Natural killer cell (primary cell): ENCODE measurements at regions of chr18 and their contacts with region 1.

Region 1: GRCh38 chr18:54805571-54806334 is 22.5 kb upstream of the RAB27B start:
- DNase-seq: peak in 1 of 2 donors; percentile 17
- ATAC-seq: peak; percentile 91 to 94 (median 93)
- H3K4me3 ChIP-seq: no peak overlapping the region
- H3K4me3 Mint-ChIP-seq: peak overlapping the region; percentile 69
- H3K27ac ChIP-seq: peak overlapping the region; percentile 40
- H3K27ac Mint-ChIP-seq: peak overlapping the region; percentile 67 to 87
- H3K4me1 ChIP-seq: peaks cover 4% of the 10 kb centered on the region
- H3K4me1 Mint-ChIP-seq: peaks cover 23 to 36% of the 10 kb centered on the region in 2 donors
- H3K27me3 ChIP-seq: no peaks in the 10 kb centered on the region
- H3K27me3 Mint-ChIP-seq: no peaks in the 10 kb centered on the region
- CTCF ChIP-seq: no peak

Region 2: DNA sequence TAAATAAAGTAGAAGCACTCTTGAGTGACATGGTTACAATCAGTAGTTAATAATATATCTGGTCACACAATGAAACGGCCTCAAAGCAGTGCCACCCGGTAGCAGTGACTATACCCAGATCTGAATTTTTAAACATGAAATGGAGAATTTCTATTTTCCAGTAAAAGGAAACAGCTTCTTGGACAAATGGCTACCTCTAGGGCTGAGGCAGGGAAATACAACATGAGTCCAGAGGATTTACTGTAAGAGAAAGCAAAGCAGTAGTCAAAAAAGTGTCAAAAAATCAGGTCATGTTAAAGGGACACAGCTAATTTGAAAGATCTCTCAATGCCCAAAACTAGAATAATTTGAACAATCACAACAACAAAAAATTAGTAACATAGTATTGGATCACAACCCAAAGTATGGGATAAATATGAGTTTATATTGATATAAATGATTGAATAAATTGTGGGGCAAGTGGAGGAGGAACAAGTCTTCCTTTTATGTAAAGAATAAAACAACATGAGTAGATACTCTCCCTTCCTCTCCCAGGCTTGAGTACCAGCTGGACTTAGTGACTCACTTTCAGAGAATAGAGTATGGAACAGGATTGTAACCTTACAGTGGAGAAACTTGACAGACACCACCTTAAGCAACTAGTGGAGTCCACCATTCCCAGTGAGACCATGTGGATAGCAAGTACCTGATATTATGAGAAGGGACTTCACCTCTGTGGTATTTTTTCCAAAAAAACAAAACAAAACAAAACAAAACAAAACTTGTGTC is 762.1 kb before region 1 on chr18:
- intact Hi-C with region 1: no loop called
- DNase-seq: no peak
- ATAC-seq: no peak
- H3K4me3 ChIP-seq: no peak overlapping the region
- H3K4me3 Mint-ChIP-seq: no peak overlapping the region
- H3K27ac ChIP-seq: no peak overlapping the region
- H3K27ac Mint-ChIP-seq: no peak overlapping the region
- H3K4me1 ChIP-seq: no peaks in the 10 kb centered on the region
- H3K4me1 Mint-ChIP-seq: no peaks in the 10 kb centered on the region
- H3K27me3 ChIP-seq: no peaks in the 10 kb centered on the region
- H3K27me3 Mint-ChIP-seq: peaks cover 0 to 5% of the 10 kb centered on the region in 2 donors
- CTCF ChIP-seq: no peak

Region 3: DNA sequence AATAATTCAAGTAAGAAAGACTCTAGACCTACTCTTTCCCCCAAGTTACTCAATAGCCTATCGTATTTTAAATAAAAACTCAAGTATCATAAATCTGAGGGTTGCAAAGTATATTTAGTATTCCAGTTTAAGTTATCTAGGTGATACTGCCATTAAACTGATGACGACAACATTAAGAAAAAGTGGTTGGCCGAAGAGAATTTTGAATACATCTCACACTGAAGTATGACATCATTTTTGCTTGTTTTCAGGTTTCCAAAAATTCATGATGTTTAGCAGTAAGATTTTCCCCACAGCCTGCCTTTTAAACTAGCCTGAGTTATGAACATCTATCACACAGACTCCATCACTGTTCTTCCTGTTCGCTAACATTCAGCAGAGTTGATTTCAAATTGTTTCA is 79.6 kb before region 1 on chr18:
- intact Hi-C with region 1: no loop called
- DNase-seq: no peak
- ATAC-seq: no peak
- H3K4me3 ChIP-seq: no peak overlapping the region
- H3K4me3 Mint-ChIP-seq: no peak overlapping the region
- H3K27ac ChIP-seq: no peak overlapping the region
- H3K27ac Mint-ChIP-seq: no peak overlapping the region
- H3K4me1 ChIP-seq: no peaks in the 10 kb centered on the region
- H3K4me1 Mint-ChIP-seq: no peaks in the 10 kb centered on the region
- H3K27me3 ChIP-seq: no peaks in the 10 kb centered on the region
- H3K27me3 Mint-ChIP-seq: peaks cover 0 to 13% of the 10 kb centered on the region in 2 donors
- CTCF ChIP-seq: no peak

Region 4: DNA sequence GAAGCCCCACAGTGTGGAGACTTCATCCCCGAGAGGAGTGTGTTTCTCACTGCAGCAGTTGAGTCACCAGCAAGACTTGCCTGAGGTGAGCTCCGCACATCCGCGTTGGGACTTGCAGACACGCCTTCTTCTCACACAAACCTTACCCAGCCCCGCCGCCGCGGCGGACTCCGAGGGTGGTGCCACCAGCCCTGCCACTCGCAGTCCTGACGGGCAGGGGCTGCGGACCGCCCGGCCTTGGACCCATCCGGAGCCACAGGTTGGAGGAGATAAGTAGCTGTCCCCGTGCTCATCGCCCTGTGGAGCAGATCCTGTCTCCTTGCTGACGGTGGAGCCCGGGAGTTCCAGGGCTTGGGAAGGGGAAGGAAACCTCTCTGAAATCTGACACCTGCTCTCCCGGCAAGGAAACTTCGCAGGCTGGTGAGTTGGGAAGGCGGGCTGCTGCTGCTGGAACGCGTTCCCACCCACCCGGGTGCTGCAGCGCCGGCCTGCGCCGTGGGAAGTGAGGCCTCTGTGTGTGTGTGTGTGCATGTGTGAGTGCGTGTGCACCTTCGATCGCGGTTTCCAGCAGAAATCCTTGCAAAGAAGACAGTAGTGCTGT is 22.6 kb after region 1 on chr18 and contains the start of gene RAB27B:
- intact Hi-C with region 1: loop called (anchors 1 kb)
- DNase-seq: peak; percentile 78
- ATAC-seq: peak; percentile 94 to 98 (median 96)
- H3K4me3 ChIP-seq: peak within 1 kb of the TSS; percentile 62
- H3K4me3 Mint-ChIP-seq: peak within 1 kb of the TSS; percentile 98
- H3K27ac ChIP-seq: peak within 1 kb of the TSS; percentile 71
- H3K27ac Mint-ChIP-seq: peak within 1 kb of the TSS; percentile 91 to 94
- H3K4me1 ChIP-seq: peaks cover 4% of the 10 kb centered on the region
- H3K4me1 Mint-ChIP-seq: peaks cover 48 to 57% of the 10 kb centered on the region in 2 donors
- H3K27me3 ChIP-seq: no peaks in the 10 kb centered on the region
- H3K27me3 Mint-ChIP-seq: peaks cover 0 to 8% of the 10 kb centered on the region in 2 donors
- CTCF ChIP-seq: no peak
- total RNA-seq, gene RAB27B: 23.0 to 25.7 (median 24.0) TPM

Region 5: DNA sequence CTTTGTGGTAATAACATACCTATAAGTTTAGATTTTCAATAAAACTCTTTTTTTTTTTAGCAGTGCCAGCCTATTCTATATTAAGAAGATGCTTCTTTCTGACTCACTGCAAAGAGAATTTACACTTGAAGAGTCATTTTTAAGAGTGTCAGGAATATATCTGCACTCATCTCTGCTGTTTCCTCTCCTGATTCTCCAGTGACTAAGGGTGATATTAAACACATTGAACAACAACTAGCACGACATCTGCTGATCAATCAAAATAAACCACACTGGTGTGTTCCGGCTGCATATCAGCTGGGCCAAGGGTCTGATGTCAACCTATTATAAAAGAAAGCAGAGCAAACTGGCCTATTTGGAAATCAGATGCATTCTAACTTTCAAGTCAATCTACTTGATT is 37.6 kb after region 1 on chr18:
- intact Hi-C with region 1: no loop called
- DNase-seq: no peak
- ATAC-seq: no peak
- H3K4me3 ChIP-seq: no peak overlapping the region
- H3K4me3 Mint-ChIP-seq: no peak overlapping the region
- H3K27ac ChIP-seq: no peak overlapping the region
- H3K27ac Mint-ChIP-seq: peak overlapping the region; percentile 38 to 68
- H3K4me1 ChIP-seq: no peaks in the 10 kb centered on the region
- H3K4me1 Mint-ChIP-seq: peaks cover 41 to 44% of the 10 kb centered on the region in 2 donors
- H3K27me3 ChIP-seq: no peaks in the 10 kb centered on the region
- H3K27me3 Mint-ChIP-seq: no peaks in the 10 kb centered on the region
- CTCF ChIP-seq: no peak